Activated CD4-positive, alpha-beta T cell treated with anti-CD3 and anti-CD28 coated beads for 36 hours (primary cell): ENCODE measurements at regions of chr3 and their contacts with region 1.

Region 1: GRCh38 chr3:100492059-100493006 is at the start of gene TMEM45A:
- DNase-seq: peak; percentile 91
- ATAC-seq: peak; percentile 100
- H3K4me3 Mint-ChIP-seq: peak within 1 kb of the TSS; percentile 82
- H3K27ac Mint-ChIP-seq: peak within 1 kb of the TSS; percentile 77
- H3K4me1 Mint-ChIP-seq: peaks cover 6% of the 10 kb centered on the region
- H3K27me3 Mint-ChIP-seq: peaks cover 14% of the 10 kb centered on the region
- total RNA-seq, gene TMEM45A: 2.2 to 3.1 TPM

Region 2: GRCh38 chr3:99023590-99024192 is 1468.6 kb before region 1 on chr3:
- CTCF ChIA-PET with region 1: no interaction called
- POLR2A ChIA-PET with region 1: no interaction called
- intact Hi-C with region 1: no loop called
- DNase-seq: no peak
- ATAC-seq: no peak
- H3K4me3 Mint-ChIP-seq: no peak overlapping the region
- H3K27ac Mint-ChIP-seq: no peak overlapping the region
- H3K4me1 Mint-ChIP-seq: no peaks in the 10 kb centered on the region
- H3K27me3 Mint-ChIP-seq: peaks cover 8% of the 10 kb centered on the region

Region 3: DNA sequence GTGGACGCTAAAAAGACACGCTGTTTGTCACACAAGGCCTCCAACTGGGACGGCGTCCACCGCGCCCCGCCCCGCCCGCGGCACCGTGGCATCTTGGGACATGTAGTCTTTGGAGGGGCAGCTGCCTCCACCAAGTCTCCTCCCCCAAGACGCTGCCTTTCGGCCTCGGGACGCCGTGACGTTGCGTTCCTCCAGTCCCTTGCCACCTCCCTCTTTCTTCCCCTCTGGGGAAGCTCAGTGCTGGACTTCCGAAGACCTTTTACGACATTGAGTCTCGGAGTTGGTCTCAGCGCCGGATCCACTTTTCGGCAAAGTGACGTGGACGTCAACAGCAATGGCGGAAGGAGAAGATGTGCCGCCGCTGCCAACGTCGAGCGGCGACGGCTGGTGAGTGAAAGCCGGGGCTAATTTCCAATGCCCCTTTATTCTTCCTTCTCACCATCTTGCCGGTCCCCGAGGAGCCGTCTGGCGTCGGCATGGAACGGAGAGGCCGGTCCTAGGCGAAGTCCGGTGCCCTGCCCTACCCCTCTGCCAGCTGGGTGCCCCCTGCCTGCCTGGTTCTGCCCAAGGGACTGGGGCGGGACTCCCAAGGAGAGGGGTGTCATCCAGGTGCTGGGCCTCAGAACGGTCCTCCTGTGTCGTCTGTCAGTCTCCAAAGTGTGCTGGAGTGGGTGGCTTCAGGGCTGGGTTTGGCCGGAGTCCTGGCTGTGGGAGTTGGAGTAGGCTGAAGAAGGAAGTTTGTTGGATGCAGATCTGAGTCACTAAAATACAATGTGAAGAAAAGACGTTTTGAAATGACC is 231.4 kb before region 1 on chr3 and contains the start of gene TBC1D23:
- CTCF ChIA-PET with region 1: no interaction called
- POLR2A ChIA-PET with region 1: no interaction called
- intact Hi-C with region 1: loop called in 1 of 2 experiments (anchors 2 kb)
- DNase-seq: peak; percentile 98
- ATAC-seq: peak; percentile 100
- H3K4me3 Mint-ChIP-seq: peak within 1 kb of the TSS; percentile 91
- H3K27ac Mint-ChIP-seq: peak within 1 kb of the TSS; percentile 96
- H3K4me1 Mint-ChIP-seq: peaks cover 58% of the 10 kb centered on the region
- H3K27me3 Mint-ChIP-seq: no peaks in the 10 kb centered on the region
- total RNA-seq, gene TBC1D23: 17.6 to 19.4 TPM

Region 4: GRCh38 chr3:100334488-100335351 is 157.6 kb before region 1 on chr3 and contains the start of gene NIT2:
- CTCF ChIA-PET with region 1: no interaction called
- POLR2A ChIA-PET with region 1: interaction called, 4 read pairs
- intact Hi-C with region 1: loop called in 1 of 2 experiments (anchors 1 kb)
- DNase-seq: peak; percentile 90
- ATAC-seq: peak; percentile 98
- H3K4me3 Mint-ChIP-seq: peak within 1 kb of the TSS; percentile 92
- H3K27ac Mint-ChIP-seq: peak within 1 kb of the TSS; percentile 96
- H3K4me1 Mint-ChIP-seq: peaks cover 24% of the 10 kb centered on the region
- H3K27me3 Mint-ChIP-seq: no peaks in the 10 kb centered on the region
- total RNA-seq, gene NIT2: 59.1 to 70.8 TPM